ENCODE measurements at regions of chr20 and their contacts with region 1.

Region 1: DNA sequence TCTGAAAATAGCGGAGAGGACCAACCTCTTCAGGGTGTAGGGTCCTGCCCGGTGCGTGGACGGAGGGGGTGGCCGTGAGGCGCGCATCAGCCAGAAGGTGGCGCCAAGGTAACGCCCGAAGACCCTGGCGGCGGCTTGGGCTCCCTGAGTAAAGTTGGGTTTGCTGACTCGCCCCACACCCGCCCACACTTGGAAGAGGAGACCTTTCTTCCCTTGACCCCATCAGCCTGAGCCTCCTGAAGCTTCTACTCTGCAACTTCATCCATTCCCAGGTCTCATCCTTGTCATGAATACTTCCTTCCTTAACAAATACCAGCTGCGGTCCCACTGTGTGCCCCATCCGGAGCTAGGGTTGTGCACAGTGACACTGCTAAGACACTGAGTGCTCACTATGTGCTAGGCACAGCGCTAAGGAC is 14.6 kb downstream of the CD40 start:
- DNase-seq: peak; percentile 77

Region 2: GRCh38 chr20:46438156-46438750 is 305.5 kb after region 1 on chr20:
- in situ Hi-C with region 1: loop called (anchors 25 kb)
- DNase-seq: peak; percentile 66

Measured in KBM-7 (cell line).